ENCODE measurements at regions of chr1 and their contacts with region 1.

Region 1: GRCh38 chr1:184075055-184076029 is 23.8 kb downstream of the TSEN15 start:
- DNase-seq: peak; percentile 51
- H3K4me3 ChIP-seq: no peak overlapping the region
- H3K27ac ChIP-seq: no peak overlapping the region
- H3K4me1 ChIP-seq: no peaks in the 10 kb centered on the region
- H3K27me3 ChIP-seq: no peaks in the 10 kb centered on the region
- CTCF ChIP-seq: peak; percentile 70 to 72

Region 2: DNA sequence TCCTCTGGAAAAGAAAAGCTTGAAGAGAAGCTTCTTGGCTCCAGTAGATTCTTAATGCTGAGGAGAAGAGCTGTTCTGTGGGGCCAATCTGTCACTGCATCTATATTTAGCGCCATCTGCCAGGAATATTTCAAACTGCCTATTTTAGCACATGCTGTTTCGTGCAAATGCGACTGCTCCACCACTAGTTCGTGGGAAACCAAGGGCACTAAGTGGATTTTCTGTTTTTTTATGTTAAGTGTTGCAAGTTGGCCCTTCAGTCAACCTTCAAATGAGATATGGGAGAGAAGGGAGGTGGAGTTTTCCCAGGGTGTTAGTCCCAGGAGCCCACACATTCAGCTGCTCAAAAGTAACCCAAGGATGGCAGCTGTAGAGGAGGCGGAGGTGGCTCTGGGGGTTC is 68.1 kb after region 1 on chr1:
- CTCF ChIA-PET with region 1: no interaction called
- dilution Hi-C with region 1: no loop called
- in situ Hi-C with region 1: no loop called
- intact Hi-C with region 1: loop called (anchors 1 kb)
- DNase-seq: no peak
- H3K4me3 ChIP-seq: no peak overlapping the region
- H3K27ac ChIP-seq: no peak overlapping the region
- H3K4me1 ChIP-seq: no peaks in the 10 kb centered on the region
- H3K27me3 ChIP-seq: no peaks in the 10 kb centered on the region
- CTCF ChIP-seq: no peak

Region 3: DNA sequence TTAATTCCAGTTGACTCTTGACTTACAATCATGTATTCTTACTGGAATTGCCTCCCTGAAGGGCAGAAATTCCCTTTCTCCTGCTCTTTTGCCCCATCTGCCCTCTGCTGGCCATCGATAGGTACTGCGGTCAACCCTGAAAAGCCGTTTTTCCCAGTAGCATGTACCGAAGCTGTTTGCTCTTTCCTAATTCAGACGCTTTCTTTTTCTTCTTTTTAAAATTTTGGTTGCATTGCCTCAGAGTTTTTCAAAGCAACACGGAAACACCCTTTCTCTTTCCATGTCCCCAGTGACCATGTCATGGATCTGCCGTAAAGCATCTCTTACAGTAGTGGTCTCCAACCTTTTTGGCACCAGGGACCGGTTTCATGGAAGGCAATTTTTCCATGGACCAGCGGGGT is 147.3 kb after region 1 on chr1:
- CTCF ChIA-PET with region 1: no interaction called
- dilution Hi-C with region 1: no loop called
- in situ Hi-C with region 1: loop called (anchors 5 kb)
- intact Hi-C with region 1: loop called (anchors 1 kb)
- DNase-seq: peak; percentile 48
- H3K4me3 ChIP-seq: no peak overlapping the region
- H3K27ac ChIP-seq: no peak overlapping the region
- H3K4me1 ChIP-seq: no peaks in the 10 kb centered on the region
- H3K27me3 ChIP-seq: no peaks in the 10 kb centered on the region
- CTCF ChIP-seq: peak; percentile 91 to 94

Region 4: GRCh38 chr1:184465489-184466146 is 390.3 kb after region 1 on chr1:
- CTCF ChIA-PET with region 1: no interaction called
- dilution Hi-C with region 1: no loop called
- in situ Hi-C with region 1: no loop called
- intact Hi-C with region 1: loop called (anchors 10 kb)
- DNase-seq: no peak
- H3K4me3 ChIP-seq: no peak overlapping the region
- H3K27ac ChIP-seq: no peak overlapping the region
- H3K4me1 ChIP-seq: peaks cover 6% of the 10 kb centered on the region
- H3K27me3 ChIP-seq: no peaks in the 10 kb centered on the region
- CTCF ChIP-seq: no peak

Region 5: DNA sequence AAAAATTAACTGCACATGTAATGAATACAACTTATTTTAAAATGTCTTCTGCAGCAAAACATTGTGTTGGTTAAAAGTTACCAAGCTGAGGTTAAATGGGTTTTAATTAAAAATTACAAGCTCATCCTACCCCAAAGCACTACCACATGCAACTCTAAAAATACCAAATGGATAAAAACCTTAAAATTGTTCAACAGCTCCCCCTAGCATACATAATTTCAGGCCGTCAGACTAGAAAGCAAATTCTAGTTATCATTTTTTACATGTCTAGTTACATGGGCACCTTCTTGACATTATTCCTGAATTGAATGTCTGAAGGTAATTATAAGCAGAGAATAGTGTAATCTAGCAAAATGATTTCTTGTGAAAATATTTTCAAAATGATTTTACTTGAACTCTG is 488.0 kb after region 1 on chr1:
- CTCF ChIA-PET with region 1: no interaction called
- dilution Hi-C with region 1: no loop called
- in situ Hi-C with region 1: no loop called
- intact Hi-C with region 1: loop called (anchors 2 kb)
- DNase-seq: peak; percentile 16
- H3K4me3 ChIP-seq: no peak overlapping the region
- H3K27ac ChIP-seq: no peak overlapping the region
- H3K4me1 ChIP-seq: peaks cover 14% of the 10 kb centered on the region
- H3K27me3 ChIP-seq: no peaks in the 10 kb centered on the region
- CTCF ChIP-seq: peak; percentile 46 to 60

Region 6: DNA sequence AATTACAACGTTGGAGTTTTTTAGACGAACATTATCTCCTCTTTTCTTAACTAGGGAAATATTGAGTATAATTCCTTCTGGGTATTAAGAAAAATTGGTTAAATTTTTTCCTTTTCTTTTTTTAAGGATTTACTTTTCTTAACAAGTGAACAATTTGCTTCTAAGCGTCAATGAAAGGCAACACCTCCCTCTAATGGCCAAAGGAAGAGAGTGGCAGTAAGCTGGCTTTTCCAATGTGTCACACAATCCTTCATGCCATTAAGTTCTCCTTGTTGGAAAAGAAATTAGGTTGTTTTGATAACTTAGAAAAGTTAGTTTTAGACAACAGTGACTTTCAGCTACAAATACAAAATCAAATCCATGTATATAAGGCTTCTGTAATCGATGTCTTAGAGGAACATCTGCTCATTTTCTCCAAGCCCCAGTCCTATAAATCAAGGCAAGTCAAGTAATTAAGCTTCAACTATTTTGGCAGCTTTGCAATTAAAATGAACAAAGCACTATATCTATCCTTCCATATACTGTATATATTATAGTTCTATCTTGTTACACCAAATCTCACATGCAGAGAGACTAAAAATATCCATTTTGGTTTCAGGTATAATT is 616.5 kb after region 1 on chr1:
- CTCF ChIA-PET with region 1: no interaction called
- dilution Hi-C with region 1: no loop called
- in situ Hi-C with region 1: no loop called
- intact Hi-C with region 1: loop called (anchors 10 kb)
- DNase-seq: peak; percentile 41
- H3K4me3 ChIP-seq: no peak overlapping the region
- H3K27ac ChIP-seq: no peak overlapping the region
- H3K4me1 ChIP-seq: no peaks in the 10 kb centered on the region
- H3K27me3 ChIP-seq: no peaks in the 10 kb centered on the region
- CTCF ChIP-seq: peak; percentile 80 to 86

Measured in mammary epithelial cell (primary cell).